ENCODE measurements at regions of chr7 and their contacts with region 1.

Region 1: GRCh38 chr7:36994456-36995112 is 270.3 kb upstream of the AOAH start:
- DNase-seq: no peak
- ATAC-seq: no peak
- H3K4me3 ChIP-seq: no peak overlapping the region
- H3K27ac ChIP-seq: no peak overlapping the region
- H3K4me1 ChIP-seq: no peaks in the 10 kb centered on the region
- H3K27me3 ChIP-seq: no peaks in the 10 kb centered on the region
- CTCF ChIP-seq: no peak
- EP300 ChIP-seq: no peak
- POLR2A ChIP-seq: no peak
- RAD21 ChIP-seq: no peak

Region 2: DNA sequence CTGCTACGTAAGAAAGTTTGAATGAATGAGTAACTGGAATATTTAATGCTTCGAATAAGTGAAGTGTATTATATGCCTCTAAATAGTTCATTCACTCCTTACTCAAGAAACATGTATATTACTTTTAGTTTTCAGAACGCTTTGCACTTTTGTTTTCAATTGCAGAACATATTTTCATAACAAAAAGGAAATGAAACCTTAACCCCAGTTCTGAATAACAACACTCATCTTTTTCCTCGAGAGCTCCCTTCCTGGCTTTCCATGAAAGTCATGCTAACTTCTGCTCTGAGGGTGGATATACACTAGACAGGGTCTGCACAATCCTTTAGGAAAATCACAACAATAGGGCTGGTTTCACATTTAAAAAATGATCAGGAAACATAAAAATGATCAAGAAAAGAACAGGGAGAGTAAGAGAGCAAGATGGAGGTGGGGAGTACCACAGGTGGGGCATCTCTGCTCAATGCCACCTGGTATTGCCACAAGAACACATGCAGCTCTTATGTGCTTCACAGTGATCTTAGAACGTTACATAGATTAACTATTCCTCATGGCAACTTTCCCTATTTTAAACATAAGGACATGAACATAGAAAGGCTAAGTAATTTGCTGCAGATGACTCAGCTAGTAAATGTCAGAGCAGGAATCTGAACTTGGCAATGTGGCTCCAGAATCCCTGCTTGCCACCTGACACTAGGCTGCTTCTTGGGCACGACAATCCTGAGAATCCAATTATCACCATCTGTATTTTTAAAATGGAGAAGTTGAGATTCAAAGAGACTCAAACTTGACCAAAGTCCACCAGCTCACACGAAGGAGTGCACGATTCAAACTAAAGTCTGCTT is 50.8 kb before region 1 on chr7:
- CTCF ChIA-PET with region 1: no interaction called
- POLR2A ChIA-PET with region 1: no interaction called
- RAD21 ChIA-PET with region 1: no interaction called
- SMC1A ChIA-PET with region 1: no interaction called
- in situ Hi-C with region 1: no loop called
- intact Hi-C with region 1: no loop called
- DNase-seq: no peak
- ATAC-seq: peak; percentile 78
- H3K4me3 ChIP-seq: peak overlapping the region; percentile 61
- H3K27ac ChIP-seq: peak overlapping the region; percentile 47
- H3K4me1 ChIP-seq: peaks cover 42% of the 10 kb centered on the region
- H3K27me3 ChIP-seq: no peaks in the 10 kb centered on the region
- CTCF ChIP-seq: no peak
- EP300 ChIP-seq: no peak
- POLR2A ChIP-seq: no peak
- RAD21 ChIP-seq: no peak

Region 3: GRCh38 chr7:37007268-37007667 is 12.7 kb after region 1 on chr7:
- CTCF ChIA-PET with region 1: interaction called, 8 read pairs
- POLR2A ChIA-PET with region 1: interaction called, 6 read pairs
- RAD21 ChIA-PET with region 1: interaction called, 3 read pairs
- SMC1A ChIA-PET with region 1: interaction called, 15 read pairs
- in situ Hi-C with region 1: no loop called
- intact Hi-C with region 1: no loop called
- DNase-seq: no peak
- ATAC-seq: no peak
- H3K4me3 ChIP-seq: no peak overlapping the region
- H3K27ac ChIP-seq: no peak overlapping the region
- H3K4me1 ChIP-seq: no peaks in the 10 kb centered on the region
- H3K27me3 ChIP-seq: no peaks in the 10 kb centered on the region
- CTCF ChIP-seq: no peak
- EP300 ChIP-seq: no peak
- POLR2A ChIP-seq: no peak
- RAD21 ChIP-seq: no peak

Measured in GM12878 (cell line).